Activated B cell treated with CpG ODN at 0.5 μM for 24 hours (primary cell): ENCODE measurements at regions of chr21 and their contacts with region 1.

Region 1: GRCh38 chr21:41816220-41817165 is 49.6 kb upstream of the RIPK4 start:
- DNase-seq: peak; percentile 53
- ATAC-seq: peak; percentile 94
- H3K4me3 Mint-ChIP-seq: no peak overlapping the region
- H3K27ac Mint-ChIP-seq: no peak overlapping the region
- H3K4me1 Mint-ChIP-seq: peaks cover 8% of the 10 kb centered on the region
- H3K27me3 Mint-ChIP-seq: no peaks in the 10 kb centered on the region
- CTCF ChIP-seq: no peak

Region 2: DNA sequence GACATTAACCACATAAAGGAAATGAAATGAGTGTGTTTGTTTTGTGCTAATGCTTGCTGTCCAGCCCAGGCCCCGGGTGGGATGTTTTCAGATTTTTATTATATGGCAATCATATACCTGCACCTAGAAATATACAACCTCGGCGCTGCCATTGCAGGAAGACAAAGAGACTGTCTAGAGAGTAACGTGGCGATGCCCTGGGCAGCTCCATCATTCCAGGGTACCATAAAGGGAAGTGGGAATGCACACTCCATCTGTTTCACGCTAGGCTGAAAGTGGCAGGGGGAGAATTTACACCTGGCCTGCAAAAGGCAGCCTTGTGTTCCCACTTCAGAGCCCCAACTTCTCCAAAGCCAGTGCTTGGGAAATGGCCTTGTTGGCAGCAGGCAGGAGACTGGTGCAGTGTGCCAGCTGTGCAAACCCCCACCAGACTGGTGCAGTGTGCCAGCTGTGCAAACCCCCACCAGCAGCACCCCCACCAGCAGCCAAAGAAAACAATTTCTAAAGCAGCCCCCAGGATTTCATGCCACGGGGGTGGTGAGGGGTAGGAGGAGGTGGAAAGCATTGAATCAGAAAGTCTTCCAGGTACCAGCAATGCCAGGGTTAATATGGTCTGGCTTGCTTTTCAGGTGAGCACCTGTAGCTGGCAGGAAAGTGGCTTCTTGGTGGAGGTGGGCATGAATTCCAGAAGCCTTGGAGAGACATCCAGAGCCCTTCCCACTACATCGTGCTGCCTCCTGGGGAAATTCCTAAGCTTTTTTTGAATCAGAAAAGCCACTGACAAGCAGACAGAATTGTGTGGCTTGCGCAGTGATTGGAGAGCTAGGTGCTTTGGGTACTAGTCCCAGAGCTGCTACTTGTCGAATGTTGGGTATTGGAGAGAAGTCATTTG is 641.1 kb before region 1 on chr21:
- CTCF ChIA-PET with region 1: no interaction called
- POLR2A ChIA-PET with region 1: no interaction called
- intact Hi-C with region 1: no loop called
- DNase-seq: no peak
- ATAC-seq: no peak
- H3K4me3 Mint-ChIP-seq: no peak overlapping the region
- H3K27ac Mint-ChIP-seq: no peak overlapping the region
- H3K4me1 Mint-ChIP-seq: peaks cover 16% of the 10 kb centered on the region
- H3K27me3 Mint-ChIP-seq: peaks cover 5% of the 10 kb centered on the region
- CTCF ChIP-seq: no peak

Region 3: DNA sequence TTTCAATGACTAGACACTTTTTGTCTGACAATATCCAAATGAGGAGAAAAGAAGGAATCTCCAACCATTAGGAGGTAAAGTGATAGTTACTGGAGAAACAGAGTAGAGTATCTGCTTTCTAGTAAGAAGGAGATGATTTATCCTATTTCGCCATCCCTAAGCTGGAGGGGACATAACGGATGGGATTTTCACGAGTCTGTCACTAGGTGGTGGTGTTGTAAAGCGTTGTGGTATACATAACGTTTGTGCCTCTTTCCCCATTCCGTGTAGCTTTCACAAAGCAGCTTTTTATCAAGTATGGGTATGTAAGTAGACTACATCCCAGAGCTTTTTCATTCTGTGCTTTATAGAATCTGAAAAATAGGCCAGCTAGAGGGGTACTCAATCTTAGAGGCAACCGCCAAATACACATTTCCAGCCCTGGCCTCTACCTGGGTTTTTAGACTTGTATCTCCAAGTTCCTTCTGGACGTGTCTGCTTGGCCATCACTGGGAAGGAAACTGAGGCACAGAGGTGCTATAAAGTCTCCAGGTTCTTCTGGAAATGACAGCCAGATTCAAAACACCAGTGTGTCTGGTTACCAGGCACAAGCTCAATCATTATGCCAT is 533.2 kb before region 1 on chr21:
- CTCF ChIA-PET with region 1: interaction called, 29 read pairs
- POLR2A ChIA-PET with region 1: no interaction called
- intact Hi-C with region 1: loop called (anchors 1 kb)
- DNase-seq: no peak
- ATAC-seq: peak; percentile 93
- H3K4me3 Mint-ChIP-seq: no peak overlapping the region
- H3K27ac Mint-ChIP-seq: no peak overlapping the region
- H3K4me1 Mint-ChIP-seq: peaks cover 2% of the 10 kb centered on the region
- H3K27me3 Mint-ChIP-seq: no peaks in the 10 kb centered on the region
- CTCF ChIP-seq: no peak

Region 4: DNA sequence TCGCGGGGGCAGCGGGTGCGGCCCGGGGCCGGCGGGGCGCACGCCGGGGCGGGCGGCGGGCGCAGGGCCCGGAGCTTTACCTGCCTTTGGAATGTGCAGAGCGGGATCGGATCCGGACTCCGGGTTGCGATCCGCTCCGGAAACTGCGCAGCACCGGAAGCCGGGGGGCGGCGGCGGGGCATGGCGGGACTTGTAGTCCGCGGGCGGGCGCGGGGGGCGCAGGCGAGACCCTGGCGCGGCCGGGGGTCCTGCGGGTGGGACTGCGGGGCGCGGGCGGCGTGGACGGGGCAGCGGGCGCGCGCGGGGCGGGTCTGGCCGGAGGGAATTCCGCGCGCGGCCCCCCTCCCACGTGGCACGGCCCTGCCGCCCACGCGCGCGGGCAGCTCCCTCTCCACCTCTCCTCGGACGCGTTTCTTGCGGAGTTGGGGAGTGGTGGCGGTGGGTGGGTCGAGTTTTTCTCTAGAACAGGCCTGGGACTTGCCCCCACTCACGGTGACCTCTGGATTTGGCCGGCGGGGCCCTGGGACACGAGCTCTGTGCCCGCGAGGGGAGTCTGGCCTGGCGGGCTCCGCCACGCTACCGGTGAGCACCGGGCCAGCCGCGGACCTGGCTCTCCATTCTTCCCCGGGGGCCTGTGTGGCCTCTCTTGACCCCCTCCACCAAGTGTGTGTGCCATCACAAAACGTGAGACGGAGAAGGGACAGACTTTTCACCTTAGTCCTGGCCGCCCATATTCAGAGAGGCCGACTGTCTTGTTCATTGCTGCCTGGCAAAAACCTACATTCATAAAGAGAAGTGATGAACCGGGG is 62.9 kb after region 1 on chr21 and contains the start of gene PRDM15:
- CTCF ChIA-PET with region 1: interaction called, 6 read pairs
- POLR2A ChIA-PET with region 1: no interaction called
- intact Hi-C with region 1: loop called (anchors 1 kb)
- DNase-seq: peak; percentile 83
- ATAC-seq: peak; percentile 63
- H3K4me3 Mint-ChIP-seq: peak within 1 kb of the TSS; percentile 90
- H3K27ac Mint-ChIP-seq: peak within 1 kb of the TSS; percentile 93
- H3K4me1 Mint-ChIP-seq: peaks cover 39% of the 10 kb centered on the region
- H3K27me3 Mint-ChIP-seq: no peaks in the 10 kb centered on the region
- CTCF ChIP-seq: no peak
- total RNA-seq, gene PRDM15: 12.8 and 13.6 TPM in 2 replicates

Region 5: GRCh38 chr21:41933313-41934086 is 117.0 kb after region 1 on chr21:
- CTCF ChIA-PET with region 1: interaction called, 8 read pairs
- POLR2A ChIA-PET with region 1: interaction called, 3 read pairs
- intact Hi-C with region 1: loop called (anchors 1 kb)
- DNase-seq: no peak
- ATAC-seq: no peak
- H3K4me3 Mint-ChIP-seq: peak overlapping the region; percentile 53
- H3K27ac Mint-ChIP-seq: no peak overlapping the region
- H3K4me1 Mint-ChIP-seq: peaks cover 40% of the 10 kb centered on the region
- H3K27me3 Mint-ChIP-seq: peaks cover 3% of the 10 kb centered on the region
- CTCF ChIP-seq: no peak

Region 6: GRCh38 chr21:42107881-42108553 is 291.5 kb after region 1 on chr21:
- CTCF ChIA-PET with region 1: interaction called, 15 read pairs
- POLR2A ChIA-PET with region 1: no interaction called
- intact Hi-C with region 1: no loop called
- DNase-seq: peak; percentile 55
- ATAC-seq: peak; percentile 88
- H3K4me3 Mint-ChIP-seq: peak overlapping the region; percentile 65
- H3K27ac Mint-ChIP-seq: peak overlapping the region; percentile 61
- H3K4me1 Mint-ChIP-seq: peaks cover 28% of the 10 kb centered on the region
- H3K27me3 Mint-ChIP-seq: no peaks in the 10 kb centered on the region
- CTCF ChIP-seq: no peak

Region 7: DNA sequence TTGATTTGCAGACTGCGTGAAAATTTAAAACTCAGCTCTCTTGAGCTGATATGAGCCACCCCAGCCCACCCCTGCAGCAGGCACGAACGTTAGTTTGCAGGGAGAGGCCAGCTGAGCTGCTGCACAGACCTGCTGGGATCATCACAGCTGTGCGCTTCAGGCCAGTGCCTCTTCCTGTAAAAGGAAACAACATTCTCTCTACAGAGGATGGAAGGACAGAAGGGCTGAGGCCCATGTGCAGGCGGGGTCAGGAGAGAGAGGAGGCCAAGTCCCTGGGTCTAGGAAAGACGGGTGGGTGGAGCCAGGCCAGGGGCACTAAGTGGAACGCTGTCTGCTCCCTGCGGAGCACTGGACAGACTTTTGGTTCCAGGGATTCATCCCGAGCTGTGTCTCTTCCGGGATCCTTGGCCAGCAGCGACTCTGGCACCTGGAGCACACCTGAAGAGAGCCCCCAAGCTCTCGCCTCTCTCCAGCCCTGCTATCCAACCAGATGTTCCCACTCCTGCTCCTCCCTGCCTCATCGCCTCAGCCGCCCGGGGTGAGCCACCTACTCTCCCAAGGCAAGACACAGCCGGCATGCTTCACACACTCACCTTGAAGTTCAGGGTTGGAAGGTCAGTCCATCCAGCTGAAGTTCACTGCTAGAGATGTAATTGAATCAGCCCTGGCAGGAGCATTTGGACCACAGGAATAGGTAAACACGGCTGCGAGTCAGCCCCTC is 637.2 kb after region 1 on chr21:
- CTCF ChIA-PET with region 1: no interaction called
- POLR2A ChIA-PET with region 1: no interaction called
- intact Hi-C with region 1: loop called (anchors 1 kb)
- DNase-seq: no peak
- ATAC-seq: no peak
- H3K4me3 Mint-ChIP-seq: no peak overlapping the region
- H3K27ac Mint-ChIP-seq: no peak overlapping the region
- H3K4me1 Mint-ChIP-seq: peaks cover 11% of the 10 kb centered on the region
- H3K27me3 Mint-ChIP-seq: no peaks in the 10 kb centered on the region
- CTCF ChIP-seq: no peak